ENCODE measurements at regions of chr5 and their contacts with region 1.

Region 1: DNA sequence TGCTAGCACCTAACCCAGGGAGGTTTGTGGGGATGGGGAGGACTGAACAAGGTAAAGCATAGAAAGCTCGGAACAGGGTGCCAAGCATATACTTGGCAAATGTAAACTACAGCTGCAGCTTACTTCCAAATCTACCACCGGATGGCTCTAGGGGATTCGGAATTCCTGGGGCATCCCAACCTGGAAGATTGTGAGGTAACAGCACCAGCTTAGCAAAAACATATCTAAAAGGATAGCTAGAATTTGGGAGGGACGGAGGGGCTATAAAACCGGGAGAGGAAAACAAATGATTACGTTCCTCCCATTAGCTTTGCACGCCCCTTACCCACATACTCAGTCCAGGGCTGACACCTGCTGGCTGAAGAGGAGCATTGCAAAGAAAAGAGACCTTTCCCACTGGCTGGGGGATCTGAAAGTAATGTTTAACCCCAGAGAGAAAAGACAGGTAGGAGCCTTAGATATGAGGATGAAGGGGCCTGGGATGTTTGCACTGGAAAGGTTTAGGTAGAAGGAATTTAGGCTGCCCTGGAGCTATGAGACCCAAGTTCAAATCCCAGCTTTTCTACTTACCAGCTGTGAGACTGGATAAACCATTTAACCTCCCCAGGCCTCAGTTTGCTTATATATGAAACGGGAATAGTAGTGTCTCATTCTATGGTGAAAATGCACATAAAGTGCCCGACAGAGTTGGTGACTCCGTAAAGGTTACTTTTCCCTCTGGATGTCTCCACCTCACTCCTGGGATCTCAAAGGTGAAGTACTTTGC is 73.6 kb downstream of the FAM114A2 start:
- DNase-seq: no peak
- ATAC-seq: peak; percentile 83 to 85

Region 2: GRCh38 chr5:152532714-152533113 is 1432.3 kb before region 1 on chr5:
- intact Hi-C with region 1: loop called (anchors 2 to 5 kb)
- DNase-seq: no peak
- ATAC-seq: peak in 1 of 2 donors; percentile 12

Region 3: GRCh38 chr5:154273028-154273617 is 308.1 kb after region 1 on chr5:
- intact Hi-C with region 1: no loop called
- DNase-seq: peak; percentile 48
- ATAC-seq: peak; percentile 75 to 79